H1 (cell line): ENCODE measurements at regions of chr3 and their contacts with region 1.

Region 1: DNA sequence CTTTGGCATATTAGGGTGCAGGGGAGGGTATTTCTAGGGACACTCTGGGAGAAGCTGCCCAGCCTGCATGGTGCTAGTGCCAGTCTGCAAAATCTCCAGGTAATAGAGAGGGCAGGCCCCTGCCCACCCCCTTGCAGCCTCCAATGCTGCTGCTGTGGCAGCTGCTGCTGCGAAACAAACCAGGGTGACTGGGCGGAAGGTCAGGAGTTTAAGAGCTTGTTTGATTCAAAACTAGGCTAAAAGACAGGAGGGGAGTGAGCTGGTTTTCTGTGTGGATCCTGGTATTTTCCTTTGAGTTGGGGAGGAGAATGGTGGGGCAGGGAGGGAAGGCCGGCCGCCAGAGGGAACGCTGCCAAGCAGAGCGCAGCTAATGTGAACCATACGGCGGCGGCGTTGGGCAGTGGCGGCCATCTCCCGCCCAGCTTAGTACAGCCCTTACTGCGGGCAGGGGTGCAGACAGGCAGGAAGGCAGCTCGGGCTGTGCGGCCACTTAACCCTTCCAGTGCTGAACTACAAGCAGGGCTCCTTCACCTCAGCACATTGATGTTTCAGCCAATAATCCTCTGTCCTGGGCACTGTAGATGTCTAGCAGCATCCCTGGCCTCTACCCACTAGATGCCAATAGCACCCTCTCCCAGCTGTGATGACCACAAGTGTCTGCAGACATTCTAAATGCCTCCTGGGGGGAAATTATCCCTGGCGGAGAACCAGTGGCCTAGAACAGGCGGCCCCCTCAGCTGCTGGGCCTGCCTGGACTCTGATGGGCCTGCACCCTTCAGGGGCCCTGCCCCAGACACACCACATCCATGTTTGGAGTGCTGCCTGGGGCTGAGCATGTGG is 125.7 kb downstream of the EEFSEC start:
- DNase-seq: peak in 1 of 2 experiments; percentile 59
- H3K4me3 ChIP-seq: no peak overlapping the region
- H3K27ac ChIP-seq: no peak overlapping the region
- H3K4me1 ChIP-seq: peaks cover 31 to 75% (median 47%) of the 10 kb centered on the region in 4 experiments
- H3K27me3 ChIP-seq: peaks cover 0 to 12% (median 7%) of the 10 kb centered on the region in 4 experiments; a peak in 3 of 7 replicates
- CTCF ChIP-seq: peak in 2 of 3 experiments; percentile 4 to 12; a peak in 1 of 4 replicates
- EP300 ChIP-seq: no peak
- POLR2A ChIP-seq: no peak
- RAD21 ChIP-seq: peak in 1 of 2 experiments; percentile 17; a peak in 1 of 4 replicates

Region 2: DNA sequence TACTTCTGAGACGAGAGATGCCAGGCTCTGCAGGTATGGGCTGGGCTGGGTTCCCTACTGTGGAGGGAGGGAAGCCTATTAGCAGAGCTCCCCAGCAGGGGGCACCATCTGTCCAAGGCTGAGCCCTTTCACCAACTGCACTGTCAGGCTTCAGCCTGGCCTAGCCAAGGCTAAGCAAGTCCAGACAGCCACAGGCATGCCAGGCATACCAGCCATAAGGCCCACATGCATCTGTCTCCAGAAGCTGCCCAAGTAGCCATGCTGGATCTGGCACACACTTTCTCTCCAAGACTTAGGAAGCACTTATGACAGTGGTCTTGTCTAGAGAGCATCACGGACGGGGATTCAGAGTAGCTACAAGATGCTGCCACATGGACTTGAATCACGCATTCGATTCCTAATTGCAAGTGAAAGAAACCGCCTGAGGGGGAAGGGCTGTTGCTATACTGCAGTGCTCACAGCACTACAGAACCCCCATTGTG is 183.7 kb before region 1 on chr3:
- CTCF ChIA-PET with region 1: no interaction called
- POLR2A ChIA-PET with region 1: no interaction called
- DNase-seq: peak; percentile 63 to 86
- H3K4me3 ChIP-seq: peak overlapping the region in 1 of 4 experiments; percentile 17; a peak in 1 of 8 replicates
- H3K27ac ChIP-seq: no peak overlapping the region
- H3K4me1 ChIP-seq: peaks cover 9 to 30% (median 19%) of the 10 kb centered on the region in 4 experiments
- H3K27me3 ChIP-seq: no peaks in the 10 kb centered on the region
- CTCF ChIP-seq: peak; percentile 61 to 74 (median 64)
- EP300 ChIP-seq: no peak
- POLR2A ChIP-seq: no peak
- RAD21 ChIP-seq: peak; percentile 76 to 78

Region 3: DNA sequence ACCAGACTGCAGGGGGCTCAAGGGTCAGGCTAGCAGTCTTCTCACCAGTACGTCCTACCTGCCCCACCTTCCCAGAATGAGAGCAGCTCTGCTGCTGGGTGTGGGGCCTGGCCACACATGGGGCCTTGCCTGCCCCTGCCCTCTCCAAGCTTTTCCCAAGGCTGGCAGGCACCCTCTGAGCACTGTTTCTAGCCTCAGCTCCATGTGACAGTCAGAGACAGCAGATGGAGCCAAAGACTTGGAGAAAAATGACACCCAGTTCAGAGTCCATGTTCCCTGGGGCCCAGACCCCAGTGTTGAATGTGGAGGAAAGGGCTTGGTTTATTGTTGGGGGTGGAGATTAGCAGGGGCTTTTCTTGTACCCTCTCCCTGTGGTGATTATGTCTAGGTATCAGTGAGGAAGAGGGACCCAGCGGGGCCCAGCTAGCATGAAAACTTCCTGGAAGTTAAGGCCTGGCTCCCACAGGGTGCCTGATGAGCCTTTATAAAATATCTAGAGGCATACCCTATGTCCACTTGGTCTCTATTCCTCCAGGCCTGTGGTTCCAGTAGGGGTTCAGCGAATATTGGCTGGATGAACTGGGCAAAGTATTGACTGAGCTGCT is 28.1 kb after region 1 on chr3:
- CTCF ChIA-PET with region 1: interaction called, 22 read pairs
- POLR2A ChIA-PET with region 1: no interaction called
- DNase-seq: peak in 1 of 2 experiments; percentile 43
- H3K4me3 ChIP-seq: no peak overlapping the region
- H3K27ac ChIP-seq: no peak overlapping the region
- H3K4me1 ChIP-seq: no peaks in the 10 kb centered on the region
- H3K27me3 ChIP-seq: no peaks in the 10 kb centered on the region
- CTCF ChIP-seq: peak in 2 of 3 experiments; percentile 12 to 17; a peak in 2 of 4 replicates
- EP300 ChIP-seq: no peak
- POLR2A ChIP-seq: no peak
- RAD21 ChIP-seq: peak; percentile 48 to 63

Region 4: GRCh38 chr3:128383316-128384235 is 104.6 kb after region 1 on chr3:
- CTCF ChIA-PET with region 1: no interaction called
- POLR2A ChIA-PET with region 1: no interaction called
- DNase-seq: no peak
- H3K4me3 ChIP-seq: no peak overlapping the region
- H3K27ac ChIP-seq: no peak overlapping the region
- H3K4me1 ChIP-seq: no peaks in the 10 kb centered on the region
- H3K27me3 ChIP-seq: no peaks in the 10 kb centered on the region
- CTCF ChIP-seq: no peak
- EP300 ChIP-seq: no peak
- POLR2A ChIP-seq: no peak
- RAD21 ChIP-seq: no peak